ENCODE measurements at regions of chr13 and their contacts with region 1.

Region 1: DNA sequence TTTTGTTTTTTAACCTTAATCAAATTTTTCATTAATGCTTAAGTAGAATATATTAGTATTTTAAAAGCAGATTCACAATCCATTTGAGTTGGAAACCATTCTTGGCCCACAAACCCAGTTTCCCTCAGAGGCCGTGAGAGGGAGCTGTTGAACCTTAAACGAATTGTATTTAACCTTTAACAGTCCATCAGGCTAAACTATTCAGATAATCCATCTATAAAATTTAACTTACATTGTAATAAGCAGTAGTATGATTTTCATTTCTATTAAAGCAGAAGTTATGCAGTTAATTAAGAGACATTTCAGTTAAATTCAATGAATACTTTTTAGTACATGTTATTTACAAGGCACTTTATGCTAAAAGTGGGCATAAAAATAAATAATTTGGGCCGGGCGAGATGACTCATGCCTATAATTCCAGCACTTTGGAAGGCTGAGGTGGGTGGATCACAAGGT is 123.1 kb upstream of the C1QTNF9B start:
- DNase-seq: peak; percentile 64
- H3K4me3 Mint-ChIP-seq: no peak overlapping the region
- H3K27ac Mint-ChIP-seq: no peak overlapping the region
- H3K4me1 Mint-ChIP-seq: peaks cover 6% of the 10 kb centered on the region
- H3K27me3 Mint-ChIP-seq: no peaks in the 10 kb centered on the region

Region 2: DNA sequence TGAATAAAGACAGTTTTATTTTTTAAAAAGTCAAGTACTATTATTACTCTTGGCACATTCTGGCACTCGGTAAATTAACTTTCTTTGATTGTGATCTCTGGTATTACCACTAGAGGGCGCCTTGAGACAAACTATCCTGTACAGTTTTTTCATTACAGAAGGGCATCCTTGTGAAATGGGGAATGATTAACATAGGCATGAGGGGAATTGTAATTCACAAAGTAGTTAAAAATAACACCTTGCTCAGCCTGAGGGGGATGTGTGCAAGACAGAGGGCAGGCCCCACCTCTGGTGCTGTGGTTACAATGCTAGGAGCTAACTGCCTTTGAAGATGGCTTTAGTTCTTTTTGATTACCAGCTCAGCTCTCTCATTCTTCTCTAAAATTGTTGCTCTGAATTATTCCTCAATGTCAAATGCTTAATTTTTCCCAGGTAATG is 98.9 kb before region 1 on chr13:
- CTCF ChIA-PET with region 1: interaction called, 11 read pairs
- DNase-seq: no peak
- H3K4me3 Mint-ChIP-seq: no peak overlapping the region
- H3K27ac Mint-ChIP-seq: no peak overlapping the region
- H3K4me1 Mint-ChIP-seq: no peaks in the 10 kb centered on the region
- H3K27me3 Mint-ChIP-seq: peaks cover 37% of the 10 kb centered on the region

Region 3: GRCh38 chr13:24220086-24220703 is 199.8 kb after region 1 on chr13:
- CTCF ChIA-PET with region 1: interaction called, 67 read pairs
- DNase-seq: peak; percentile 61
- H3K4me3 Mint-ChIP-seq: no peak overlapping the region
- H3K27ac Mint-ChIP-seq: no peak overlapping the region
- H3K4me1 Mint-ChIP-seq: peaks cover 44% of the 10 kb centered on the region
- H3K27me3 Mint-ChIP-seq: no peaks in the 10 kb centered on the region

Region 4: DNA sequence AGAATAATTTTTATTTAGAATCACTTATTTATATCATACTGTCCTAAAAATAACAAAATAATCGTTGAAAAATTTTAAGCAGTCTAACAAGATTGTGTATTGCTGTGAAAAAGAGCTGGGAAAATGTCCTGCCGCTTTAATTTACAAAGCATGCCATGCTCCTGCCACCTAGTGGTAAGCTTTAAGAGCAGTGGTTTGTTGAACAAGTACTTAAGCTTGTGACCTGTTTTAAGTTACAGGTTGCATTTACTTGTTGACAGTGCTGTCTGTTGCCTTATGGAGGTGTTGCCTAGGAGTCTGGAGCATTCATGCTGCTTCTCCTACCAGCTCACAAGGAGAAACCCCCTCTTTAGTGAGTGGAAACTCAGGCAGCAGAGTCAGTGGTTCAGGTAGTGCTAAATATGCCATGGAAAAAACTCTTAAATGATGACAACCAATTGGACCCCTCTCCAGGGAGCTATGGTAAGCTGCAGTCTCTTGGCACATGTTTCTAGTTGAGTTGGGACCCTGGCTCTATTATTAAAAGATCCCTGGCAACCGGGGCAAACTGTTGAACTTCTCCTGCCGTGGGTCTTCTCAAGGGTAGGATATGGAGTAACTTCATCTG is 208.6 kb after region 1 on chr13:
- CTCF ChIA-PET with region 1: interaction called, 62 read pairs
- DNase-seq: peak; percentile 59
- H3K4me3 Mint-ChIP-seq: no peak overlapping the region
- H3K27ac Mint-ChIP-seq: no peak overlapping the region
- H3K4me1 Mint-ChIP-seq: peaks cover 25% of the 10 kb centered on the region
- H3K27me3 Mint-ChIP-seq: no peaks in the 10 kb centered on the region